CD4-positive, alpha-beta T cell (primary cell): ENCODE measurements at regions of chr6 and their contacts with region 1.

Region 1: DNA sequence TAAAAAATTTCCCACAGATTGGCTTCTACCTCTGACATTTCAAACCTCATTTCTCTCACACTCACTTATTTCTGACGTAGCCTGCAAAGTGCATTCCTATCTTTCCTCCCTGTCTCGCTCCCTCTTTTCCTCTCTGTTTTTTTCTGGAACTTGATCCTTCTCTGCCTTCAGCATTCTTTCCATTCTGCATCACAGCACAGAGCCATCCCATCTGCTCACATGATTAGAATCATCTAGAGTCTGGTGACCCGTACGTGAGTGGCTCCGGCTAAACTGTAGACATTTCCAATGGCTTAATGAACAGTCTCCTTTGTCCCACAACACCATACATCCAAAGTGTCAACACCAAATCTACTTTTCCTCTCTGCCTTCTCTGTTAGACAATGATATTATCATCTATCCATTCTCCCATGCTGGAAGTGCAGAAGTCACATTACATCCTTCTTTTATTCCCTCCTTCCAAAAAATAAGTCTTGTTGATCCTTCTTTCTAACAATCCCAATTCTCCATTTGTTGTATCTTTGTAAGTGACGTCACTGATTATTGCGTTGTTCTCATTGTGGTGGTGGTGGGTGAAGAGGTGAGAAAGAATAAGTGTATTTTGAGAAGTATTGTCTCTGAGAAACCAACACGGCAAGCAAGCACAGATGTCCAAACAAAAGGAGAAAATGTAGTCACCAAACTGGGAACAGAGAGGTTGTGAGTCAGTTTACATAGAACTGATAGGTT is 41.6 kb downstream of the OPRM1 start:
- DNase-seq: no peak
- ATAC-seq: no peak
- H3K4me3 ChIP-seq: no peak overlapping the region
- H3K4me3 Mint-ChIP-seq: no peak overlapping the region
- H3K27ac ChIP-seq: no peak overlapping the region
- H3K27ac Mint-ChIP-seq: no peak overlapping the region
- H3K4me1 ChIP-seq: no peaks in the 10 kb centered on the region
- H3K4me1 Mint-ChIP-seq: no peaks in the 10 kb centered on the region
- H3K27me3 ChIP-seq: no peaks in the 10 kb centered on the region
- H3K27me3 Mint-ChIP-seq: peaks cover 5% of the 10 kb centered on the region
- CTCF ChIP-seq: no peak

Region 2: DNA sequence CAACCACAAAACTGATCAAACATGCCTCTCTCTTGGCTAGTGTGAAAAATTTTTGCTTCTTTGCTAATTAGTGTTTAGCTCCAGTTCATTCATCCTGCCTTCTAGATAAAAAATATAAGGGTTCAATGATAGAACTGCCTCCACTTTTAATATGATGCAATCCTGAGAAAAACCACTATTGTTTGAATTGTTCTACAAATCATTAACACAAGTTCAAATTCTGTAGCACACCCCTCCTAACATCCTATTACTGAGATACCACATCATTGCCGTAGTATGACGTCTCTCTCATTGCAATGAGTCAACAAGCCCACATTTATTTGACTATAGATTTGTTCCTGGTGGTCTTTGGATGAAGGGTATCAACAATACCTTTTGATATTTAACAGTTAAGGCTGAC is 407.4 kb before region 1 on chr6:
- CTCF ChIA-PET with region 1: no interaction called
- POLR2A ChIA-PET with region 1: no interaction called
- intact Hi-C with region 1: no loop called
- DNase-seq: no peak
- ATAC-seq: no peak
- H3K4me3 ChIP-seq: no peak overlapping the region
- H3K4me3 Mint-ChIP-seq: no peak overlapping the region
- H3K27ac ChIP-seq: no peak overlapping the region
- H3K27ac Mint-ChIP-seq: no peak overlapping the region
- H3K4me1 ChIP-seq: no peaks in the 10 kb centered on the region
- H3K4me1 Mint-ChIP-seq: no peaks in the 10 kb centered on the region
- H3K27me3 ChIP-seq: no peaks in the 10 kb centered on the region
- H3K27me3 Mint-ChIP-seq: no peaks in the 10 kb centered on the region
- CTCF ChIP-seq: no peak

Region 3: GRCh38 chr6:154106251-154106650 is 25.6 kb after region 1 on chr6:
- CTCF ChIA-PET with region 1: no interaction called
- POLR2A ChIA-PET with region 1: no interaction called
- intact Hi-C with region 1: loop called in 1 of 2 experiments (anchors 2 kb)
- DNase-seq: no peak
- ATAC-seq: no peak
- H3K4me3 ChIP-seq: no peak overlapping the region
- H3K4me3 Mint-ChIP-seq: no peak overlapping the region
- H3K27ac ChIP-seq: no peak overlapping the region
- H3K27ac Mint-ChIP-seq: no peak overlapping the region
- H3K4me1 ChIP-seq: no peaks in the 10 kb centered on the region
- H3K4me1 Mint-ChIP-seq: no peaks in the 10 kb centered on the region
- H3K27me3 ChIP-seq: peaks cover 0 to 4% of the 10 kb centered on the region in 2 experiments
- H3K27me3 Mint-ChIP-seq: peaks cover 7% of the 10 kb centered on the region
- CTCF ChIP-seq: no peak